ENCODE measurements at regions of chr5 and their contacts with region 1.

Region 1: GRCh38 chr5:21919410-21920022 is 933.6 kb downstream of the CDH12 start:
- DNase-seq: peak; percentile 22
- H3K4me3 ChIP-seq: no peak overlapping the region
- H3K27ac ChIP-seq: no peak overlapping the region
- H3K4me1 ChIP-seq: no peaks in the 10 kb centered on the region
- H3K27me3 ChIP-seq: no peaks in the 10 kb centered on the region
- CTCF ChIP-seq: peak; percentile 78 to 79

Region 2: GRCh38 chr5:21810737-21811316 is 108.7 kb before region 1 on chr5:
- CTCF ChIA-PET with region 1: no interaction called
- dilution Hi-C with region 1: no loop called
- in situ Hi-C with region 1: no loop called
- intact Hi-C with region 1: loop called (anchors 2 kb)
- DNase-seq: peak; percentile 5
- H3K4me3 ChIP-seq: no peak overlapping the region
- H3K27ac ChIP-seq: no peak overlapping the region
- H3K4me1 ChIP-seq: peaks cover 11% of the 10 kb centered on the region
- H3K27me3 ChIP-seq: no peaks in the 10 kb centered on the region
- CTCF ChIP-seq: peak; percentile 40 to 54

Region 3: DNA sequence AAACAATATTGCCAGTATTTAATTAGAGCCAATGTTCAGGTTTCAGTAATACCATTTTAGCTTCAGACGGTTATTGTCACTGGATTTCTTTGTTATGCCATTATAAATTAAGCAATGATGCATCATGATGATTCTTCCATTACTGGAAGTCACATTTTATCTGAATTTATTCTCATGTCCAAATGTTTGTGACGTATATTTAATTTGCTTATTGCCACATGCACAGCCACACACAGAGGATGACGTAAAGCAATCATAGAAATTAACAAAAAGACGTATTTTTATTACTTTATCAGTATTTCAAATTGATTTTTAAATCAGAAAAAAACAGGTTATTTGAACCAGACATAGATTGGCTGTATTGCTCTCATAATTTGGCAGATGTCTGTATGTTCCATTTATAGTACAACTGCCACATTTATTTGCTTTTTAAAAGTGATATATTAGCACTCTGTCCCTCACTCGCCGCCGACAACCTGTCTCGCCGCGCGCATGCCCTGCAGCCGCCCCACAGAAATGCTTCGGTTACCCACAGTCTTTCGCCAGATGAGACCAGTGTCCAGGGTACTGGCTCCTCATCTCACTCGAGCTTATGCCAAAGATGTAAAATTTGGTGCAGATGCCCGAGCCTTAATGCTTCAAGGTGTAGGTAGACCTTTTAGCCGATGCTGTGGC is 37.3 kb before region 1 on chr5:
- CTCF ChIA-PET with region 1: no interaction called
- dilution Hi-C with region 1: no loop called
- in situ Hi-C with region 1: no loop called
- intact Hi-C with region 1: no loop called
- DNase-seq: no peak
- H3K4me3 ChIP-seq: no peak overlapping the region
- H3K27ac ChIP-seq: no peak overlapping the region
- H3K4me1 ChIP-seq: no peaks in the 10 kb centered on the region
- H3K27me3 ChIP-seq: no peaks in the 10 kb centered on the region
- CTCF ChIP-seq: no peak

Region 4: GRCh38 chr5:21895766-21896350 is 23.7 kb before region 1 on chr5:
- CTCF ChIA-PET with region 1: no interaction called
- dilution Hi-C with region 1: no loop called
- in situ Hi-C with region 1: no loop called
- intact Hi-C with region 1: no loop called
- DNase-seq: no peak
- H3K4me3 ChIP-seq: no peak overlapping the region
- H3K27ac ChIP-seq: no peak overlapping the region
- H3K4me1 ChIP-seq: no peaks in the 10 kb centered on the region
- H3K27me3 ChIP-seq: no peaks in the 10 kb centered on the region
- CTCF ChIP-seq: no peak

Region 5: GRCh38 chr5:22728610-22729009 is 809.1 kb after region 1 on chr5:
- CTCF ChIA-PET with region 1: no interaction called
- dilution Hi-C with region 1: no loop called
- in situ Hi-C with region 1: loop called in 1 of 2 experiments (anchors 25 kb)
- intact Hi-C with region 1: loop called (anchors 10 kb)
- DNase-seq: no peak
- H3K4me3 ChIP-seq: no peak overlapping the region
- H3K27ac ChIP-seq: no peak overlapping the region
- H3K4me1 ChIP-seq: no peaks in the 10 kb centered on the region
- H3K27me3 ChIP-seq: peaks cover 3% of the 10 kb centered on the region
- CTCF ChIP-seq: no peak

Region 6: GRCh38 chr5:22734910-22735309 is 815.4 kb after region 1 on chr5:
- CTCF ChIA-PET with region 1: no interaction called
- dilution Hi-C with region 1: no loop called
- in situ Hi-C with region 1: loop called in 1 of 2 experiments (anchors 25 kb)
- intact Hi-C with region 1: loop called (anchors 10 kb)
- DNase-seq: no peak
- H3K4me3 ChIP-seq: no peak overlapping the region
- H3K27ac ChIP-seq: no peak overlapping the region
- H3K4me1 ChIP-seq: no peaks in the 10 kb centered on the region
- H3K27me3 ChIP-seq: no peaks in the 10 kb centered on the region
- CTCF ChIP-seq: peak in 1 of 2 donors; percentile 10

Region 7: GRCh38 chr5:22889718-22890117 is 970.2 kb after region 1 on chr5:
- CTCF ChIA-PET with region 1: no interaction called
- dilution Hi-C with region 1: no loop called
- in situ Hi-C with region 1: no loop called
- intact Hi-C with region 1: loop called (anchors 10 kb)
- DNase-seq: no peak
- H3K4me3 ChIP-seq: no peak overlapping the region
- H3K27ac ChIP-seq: no peak overlapping the region
- H3K4me1 ChIP-seq: peaks cover 5% of the 10 kb centered on the region
- H3K27me3 ChIP-seq: no peaks in the 10 kb centered on the region
- CTCF ChIP-seq: peak; percentile 28 to 50

Region 8: GRCh38 chr5:23139338-23140171 is 1220.0 kb after region 1 on chr5:
- CTCF ChIA-PET with region 1: no interaction called
- dilution Hi-C with region 1: no loop called
- in situ Hi-C with region 1: loop called in 1 of 2 experiments (anchors 25 kb)
- intact Hi-C with region 1: loop called (anchors 1 kb)
- DNase-seq: peak; percentile 7
- H3K4me3 ChIP-seq: no peak overlapping the region
- H3K27ac ChIP-seq: no peak overlapping the region
- H3K4me1 ChIP-seq: no peaks in the 10 kb centered on the region
- H3K27me3 ChIP-seq: no peaks in the 10 kb centered on the region
- CTCF ChIP-seq: peak; percentile 49 to 69